MCF 10A (cell line): ENCODE measurements at regions of chr3 and their contacts with region 1.

Region 1: DNA sequence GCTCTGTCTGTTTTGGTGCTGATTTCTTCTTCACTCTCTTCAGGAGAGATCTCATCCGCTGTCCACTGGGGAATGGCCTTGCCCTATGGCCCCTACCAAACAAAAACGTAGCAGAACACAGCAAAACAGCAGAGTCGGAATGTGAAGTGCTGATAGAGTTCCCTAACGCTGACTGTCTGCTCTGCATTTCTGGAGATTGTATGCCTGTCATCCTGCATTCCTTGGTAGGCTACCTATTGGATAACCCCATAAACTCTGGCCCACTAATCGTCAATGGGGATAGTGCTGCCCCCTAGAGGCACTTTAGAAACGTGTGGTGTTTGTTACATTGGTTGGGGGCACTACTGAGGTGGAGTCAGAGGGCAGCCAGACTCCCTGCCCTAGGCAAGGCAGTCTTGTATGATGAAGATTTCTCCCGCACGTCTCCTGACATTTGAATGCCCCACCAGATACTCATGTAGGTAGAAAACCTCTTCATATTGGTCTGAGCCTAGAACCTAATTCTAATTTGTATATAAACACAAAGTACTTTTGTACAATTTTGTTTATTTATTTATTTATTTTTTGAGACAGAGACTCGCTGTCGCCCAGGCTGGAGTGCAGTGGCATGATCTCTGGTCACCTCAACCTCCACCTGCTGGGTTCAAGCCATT is 15.6 kb upstream of the MAGEF1 start:
- DNase-seq: peak; percentile 90
- H3K4me3 Mint-ChIP-seq: no peak overlapping the region
- H3K27ac Mint-ChIP-seq: no peak overlapping the region
- H3K4me1 Mint-ChIP-seq: peaks cover 6% of the 10 kb centered on the region
- H3K27me3 Mint-ChIP-seq: no peaks in the 10 kb centered on the region
- CTCF ChIP-seq: peak; percentile 50

Region 2: DNA sequence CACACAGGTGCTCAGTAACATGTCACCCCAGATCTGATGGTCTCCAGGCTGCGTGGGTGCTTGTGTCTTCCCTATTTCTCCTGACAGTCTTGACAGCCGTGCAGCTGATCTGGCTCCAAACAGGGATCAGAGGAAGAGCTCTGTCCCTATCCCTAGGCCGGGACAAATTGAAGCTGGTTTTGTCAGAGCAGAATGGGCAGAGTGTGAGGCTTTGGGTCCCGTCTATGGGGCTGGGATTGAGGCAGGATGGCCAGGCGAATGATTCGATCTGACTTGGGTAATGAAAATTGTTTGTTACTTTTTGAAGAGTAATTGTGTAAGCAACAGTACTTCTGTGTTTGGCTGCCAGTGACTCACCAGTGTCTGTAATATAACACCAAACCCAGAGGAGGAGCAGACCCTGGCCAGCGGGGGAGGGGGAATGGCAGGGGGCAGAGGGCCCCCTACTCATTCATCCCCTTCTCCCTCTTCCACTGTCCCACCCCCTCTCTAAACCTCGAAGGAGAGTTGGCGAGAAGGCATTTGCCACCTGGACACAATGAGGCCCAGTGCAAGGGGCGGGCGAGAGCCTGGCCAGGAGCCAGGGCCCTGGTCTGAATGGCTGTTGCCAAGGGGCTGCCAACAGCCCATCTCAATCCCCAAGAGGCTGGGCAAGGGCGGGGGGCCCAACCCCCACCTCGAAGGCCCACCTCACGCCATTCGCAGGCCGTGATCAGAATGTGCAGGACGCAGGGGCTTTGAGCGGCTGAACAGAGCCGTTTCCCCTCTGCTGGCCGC is 10.7 kb before region 1 on chr3:
- CTCF ChIA-PET with region 1: interaction called, 17 read pairs
- POLR2A ChIA-PET with region 1: interaction called, 11 read pairs
- intact Hi-C with region 1: no loop called
- DNase-seq: peak; percentile 51
- H3K4me3 Mint-ChIP-seq: no peak overlapping the region
- H3K27ac Mint-ChIP-seq: peak overlapping the region; percentile 14
- H3K4me1 Mint-ChIP-seq: peaks cover 22% of the 10 kb centered on the region
- H3K27me3 Mint-ChIP-seq: no peaks in the 10 kb centered on the region
- CTCF ChIP-seq: no peak

Region 3: DNA sequence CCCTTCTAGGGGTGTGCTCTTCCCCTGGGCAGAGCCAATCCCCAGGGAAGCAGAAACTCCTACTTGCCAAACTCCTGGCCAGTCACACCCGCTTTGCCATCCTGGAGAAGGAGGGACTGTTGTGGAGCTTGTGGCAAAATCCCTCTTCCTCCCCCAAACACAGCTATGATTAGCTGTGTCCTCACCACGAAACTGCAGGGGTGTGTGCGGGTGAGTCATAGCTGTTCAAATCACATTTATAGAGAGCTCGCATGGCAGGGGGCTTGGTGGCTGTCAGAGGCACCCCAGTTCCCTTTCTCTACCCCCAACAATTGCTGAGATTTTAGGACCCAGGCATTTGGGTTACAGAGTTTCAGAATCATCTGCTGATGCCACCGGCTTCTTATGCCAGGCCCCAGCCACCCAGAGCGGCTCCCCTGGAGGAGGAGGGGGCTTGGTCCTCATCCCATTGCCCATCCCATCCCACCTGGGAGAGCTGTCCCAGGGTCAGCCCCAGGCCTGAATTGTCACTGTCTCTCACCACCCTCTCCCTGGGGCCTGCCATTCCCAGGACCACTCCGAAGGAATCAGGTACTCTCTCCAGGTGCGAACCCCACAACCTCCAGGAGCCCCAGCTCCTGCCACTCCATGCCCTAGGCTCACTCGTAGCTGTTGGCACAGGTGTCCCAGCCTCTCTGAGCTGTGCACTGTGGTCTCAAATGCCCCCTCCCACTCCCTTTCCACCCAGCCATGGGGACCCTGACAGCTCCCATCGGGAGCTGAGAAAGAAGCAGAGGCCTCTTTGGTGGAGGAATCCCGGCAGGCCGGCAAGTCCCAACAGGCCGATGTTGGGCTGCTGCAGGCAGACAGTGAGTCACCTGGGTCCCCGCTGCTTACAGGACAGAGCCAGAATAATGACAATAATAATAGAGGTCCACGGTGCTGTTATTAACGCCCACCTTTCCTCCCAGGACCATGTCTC is 13.3 kb after region 1 on chr3:
- CTCF ChIA-PET with region 1: interaction called, 12 read pairs
- POLR2A ChIA-PET with region 1: interaction called, 5 read pairs
- intact Hi-C with region 1: no loop called
- DNase-seq: peak; percentile 96
- H3K4me3 Mint-ChIP-seq: peak overlapping the region; percentile 68
- H3K27ac Mint-ChIP-seq: peak overlapping the region; percentile 93
- H3K4me1 Mint-ChIP-seq: peaks cover 48% of the 10 kb centered on the region
- H3K27me3 Mint-ChIP-seq: no peaks in the 10 kb centered on the region
- CTCF ChIP-seq: no peak

Region 4: DNA sequence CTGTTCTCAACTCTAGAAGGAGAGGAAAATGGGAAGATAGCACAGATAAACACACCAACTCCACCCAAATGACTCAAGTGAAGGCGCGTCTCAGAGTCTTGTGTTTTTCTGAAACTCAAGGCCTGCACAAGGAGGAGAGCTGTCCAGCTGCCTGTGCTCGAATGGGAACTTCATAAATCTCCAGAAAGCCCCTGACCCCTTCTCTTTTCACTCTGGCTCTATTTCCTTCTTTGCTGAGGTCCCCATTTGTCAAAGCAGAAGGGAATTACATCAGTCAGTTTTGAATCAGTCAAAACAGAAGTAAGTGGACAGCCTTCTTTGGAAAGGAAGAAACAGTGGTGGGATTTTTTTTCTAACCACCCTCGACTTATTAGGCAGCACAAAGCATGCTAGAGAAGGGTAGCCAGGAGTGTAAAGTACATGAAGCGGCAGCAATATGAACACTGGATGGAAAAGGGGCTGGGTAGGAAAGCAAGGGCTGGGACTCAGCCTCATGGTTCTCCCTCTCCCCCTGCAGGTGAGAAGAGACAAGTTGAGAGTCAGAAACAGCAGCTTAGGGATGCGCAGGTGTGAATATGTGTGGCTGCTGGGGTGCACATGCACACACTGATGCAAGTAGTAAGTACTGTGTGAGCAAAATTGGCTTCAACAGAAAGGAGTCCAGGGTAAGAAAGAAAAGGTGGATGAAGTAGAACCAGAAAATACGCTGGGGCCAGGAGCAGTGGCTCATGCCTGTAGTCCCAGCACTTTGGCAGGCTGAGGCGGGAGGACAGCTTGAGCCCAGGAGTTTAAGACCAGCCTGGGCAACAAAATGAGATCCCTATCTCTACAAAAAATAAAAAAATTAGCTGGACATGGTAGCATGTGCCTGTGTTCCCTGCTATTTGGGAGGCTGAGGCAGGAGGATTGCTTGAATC is 21.0 kb after region 1 on chr3:
- CTCF ChIA-PET with region 1: interaction called, 7 read pairs
- POLR2A ChIA-PET with region 1: interaction called, 3 read pairs
- intact Hi-C with region 1: loop called (anchors 1 kb)
- DNase-seq: peak; percentile 73
- H3K4me3 Mint-ChIP-seq: no peak overlapping the region
- H3K27ac Mint-ChIP-seq: no peak overlapping the region
- H3K4me1 Mint-ChIP-seq: peaks cover 18% of the 10 kb centered on the region
- H3K27me3 Mint-ChIP-seq: no peaks in the 10 kb centered on the region
- CTCF ChIP-seq: peak; percentile 60

Region 5: DNA sequence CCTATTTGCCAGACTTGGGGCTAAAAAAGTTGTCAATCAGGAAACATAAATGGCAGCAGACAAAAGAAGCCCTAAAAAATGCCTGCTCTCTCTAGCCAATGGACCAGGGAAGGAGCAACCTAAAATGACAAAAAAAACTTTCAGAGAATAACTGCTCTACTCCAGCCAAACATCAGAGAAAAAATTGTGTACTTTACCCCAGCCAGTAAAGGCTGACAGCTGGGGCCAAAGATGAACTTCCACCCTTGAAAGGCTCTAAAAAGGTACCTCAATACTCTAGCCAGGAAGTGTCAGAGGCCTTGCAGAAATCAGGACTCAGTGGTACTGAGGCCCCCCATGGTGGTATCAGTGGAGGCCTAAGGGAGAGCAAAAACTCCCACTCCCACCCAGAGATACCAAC is 407.0 kb after region 1 on chr3:
- CTCF ChIA-PET with region 1: no interaction called
- POLR2A ChIA-PET with region 1: no interaction called
- intact Hi-C with region 1: no loop called
- DNase-seq: no peak
- H3K4me3 Mint-ChIP-seq: no peak overlapping the region
- H3K27ac Mint-ChIP-seq: no peak overlapping the region
- H3K4me1 Mint-ChIP-seq: no peaks in the 10 kb centered on the region
- H3K27me3 Mint-ChIP-seq: peaks cover 69% of the 10 kb centered on the region
- CTCF ChIP-seq: no peak